ENCODE measurements at regions of chr15 and their contacts with region 1.

Region 1: GRCh38 chr15:72265031-72265430 is 7.3 kb downstream of the PARP6 start:
- DNase-seq: no peak
- ATAC-seq: no peak
- H3K4me3 ChIP-seq: no peak overlapping the region
- H3K27ac ChIP-seq: no peak overlapping the region
- H3K4me1 ChIP-seq: no peaks in the 10 kb centered on the region
- H3K27me3 ChIP-seq: no peaks in the 10 kb centered on the region
- CTCF ChIP-seq: no peak

Region 2: GRCh38 chr15:72199711-72200212 is 65.3 kb before region 1 on chr15:
- intact Hi-C with region 1: loop called (anchors 10 kb)
- DNase-seq: peak; percentile 80
- ATAC-seq: peak; percentile 69 to 72
- H3K4me3 ChIP-seq: no peak overlapping the region
- H3K27ac ChIP-seq: peak overlapping the region; percentile 84
- H3K4me1 ChIP-seq: peaks cover 41% of the 10 kb centered on the region
- H3K27me3 ChIP-seq: peaks cover 12% of the 10 kb centered on the region
- CTCF ChIP-seq: peak; percentile 92